PC-3 (cell line): ENCODE measurements at regions of chr7 and their contacts with region 1.

Region 1: GRCh38 chr7:115230882-115231571 is 309.1 kb downstream of the MDFIC start:
- DNase-seq: peak; percentile 91
- ATAC-seq: peak; percentile 96
- H3K4me3 ChIP-seq: peak overlapping the region; percentile 20; the same call in 1 of the 2 replicates
- H3K27ac ChIP-seq: peak overlapping the region; percentile 87
- H3K4me1 ChIP-seq: peaks cover 25% of the 10 kb centered on the region
- H3K27me3 ChIP-seq: no peaks in the 10 kb centered on the region
- CTCF ChIP-seq: no peak

Region 2: GRCh38 chr7:114812570-114812969 is 418.5 kb before region 1 on chr7:
- CTCF ChIA-PET with region 1: no interaction called
- POLR2A ChIA-PET with region 1: interaction called, 20 read pairs
- intact Hi-C with region 1: no loop called
- DNase-seq: no peak
- ATAC-seq: no peak
- H3K4me3 ChIP-seq: no peak overlapping the region
- H3K27ac ChIP-seq: no peak overlapping the region
- H3K4me1 ChIP-seq: no peaks in the 10 kb centered on the region
- H3K27me3 ChIP-seq: no peaks in the 10 kb centered on the region
- CTCF ChIP-seq: no peak

Region 3: DNA sequence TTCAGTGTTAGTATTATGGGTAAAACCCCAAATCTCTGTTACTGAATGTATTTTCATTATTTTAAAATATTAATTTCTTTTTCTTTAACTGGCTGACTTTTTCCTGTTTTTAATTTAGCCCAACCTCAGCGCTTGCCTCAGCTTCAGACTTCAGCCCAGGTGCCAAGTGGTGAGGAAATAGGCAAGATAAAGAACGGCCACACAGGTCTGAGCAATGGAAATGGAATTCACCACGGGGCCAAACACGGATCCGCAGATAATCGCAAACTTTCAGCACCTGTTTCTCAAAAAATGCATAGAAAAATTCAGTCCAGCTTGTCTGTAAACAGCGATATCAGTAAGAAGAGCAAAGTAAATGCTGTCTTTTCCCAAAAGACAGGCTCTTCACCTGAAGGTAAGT is 251.6 kb before region 1 on chr7:
- CTCF ChIA-PET with region 1: no interaction called
- POLR2A ChIA-PET with region 1: no interaction called
- intact Hi-C with region 1: no loop called
- DNase-seq: peak; percentile 83
- ATAC-seq: peak; percentile 99
- H3K4me3 ChIP-seq: peak overlapping the region; percentile 29; the same call in 1 of the 2 replicates
- H3K27ac ChIP-seq: no peak overlapping the region
- H3K4me1 ChIP-seq: peaks cover 22% of the 10 kb centered on the region
- H3K27me3 ChIP-seq: no peaks in the 10 kb centered on the region
- CTCF ChIP-seq: no peak

Region 4: DNA sequence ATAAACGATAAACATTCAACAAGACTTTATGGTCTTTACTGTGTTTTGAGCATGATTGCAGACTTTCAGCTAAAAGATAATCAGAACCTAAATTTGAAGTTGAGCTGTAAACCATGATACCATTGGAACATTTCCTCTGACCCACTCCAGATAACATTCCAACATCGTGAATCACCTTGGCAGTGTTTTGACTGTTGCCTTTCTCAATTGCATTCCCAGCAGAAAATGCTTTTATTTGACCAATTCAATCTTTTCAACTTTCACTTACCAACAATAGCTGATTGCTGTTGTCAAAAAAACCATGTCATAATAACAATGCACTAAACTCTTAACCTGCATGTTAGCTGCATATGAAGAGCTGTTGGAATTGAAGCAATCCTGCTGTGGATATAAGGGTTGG is 143.6 kb before region 1 on chr7:
- CTCF ChIA-PET with region 1: no interaction called
- POLR2A ChIA-PET with region 1: no interaction called
- intact Hi-C with region 1: loop called (anchors 5 kb)
- DNase-seq: peak; percentile 88
- ATAC-seq: peak; percentile 86
- H3K4me3 ChIP-seq: 0 out of 2 replicates have a peak overlapping the region, but pooled peaks have one; percentile 14
- H3K27ac ChIP-seq: no peak overlapping the region
- H3K4me1 ChIP-seq: peaks cover 33% of the 10 kb centered on the region
- H3K27me3 ChIP-seq: no peaks in the 10 kb centered on the region
- CTCF ChIP-seq: no peak

Region 5: GRCh38 chr7:115135769-115136410 is 95.1 kb before region 1 on chr7:
- CTCF ChIA-PET with region 1: no interaction called
- POLR2A ChIA-PET with region 1: no interaction called
- intact Hi-C with region 1: loop called (anchors 1 kb)
- DNase-seq: peak; percentile 80
- ATAC-seq: peak; percentile 83
- H3K4me3 ChIP-seq: peak overlapping the region; percentile 30
- H3K27ac ChIP-seq: peak overlapping the region; percentile 85
- H3K4me1 ChIP-seq: peaks cover 29% of the 10 kb centered on the region
- H3K27me3 ChIP-seq: no peaks in the 10 kb centered on the region
- CTCF ChIP-seq: no peak

Region 6: DNA sequence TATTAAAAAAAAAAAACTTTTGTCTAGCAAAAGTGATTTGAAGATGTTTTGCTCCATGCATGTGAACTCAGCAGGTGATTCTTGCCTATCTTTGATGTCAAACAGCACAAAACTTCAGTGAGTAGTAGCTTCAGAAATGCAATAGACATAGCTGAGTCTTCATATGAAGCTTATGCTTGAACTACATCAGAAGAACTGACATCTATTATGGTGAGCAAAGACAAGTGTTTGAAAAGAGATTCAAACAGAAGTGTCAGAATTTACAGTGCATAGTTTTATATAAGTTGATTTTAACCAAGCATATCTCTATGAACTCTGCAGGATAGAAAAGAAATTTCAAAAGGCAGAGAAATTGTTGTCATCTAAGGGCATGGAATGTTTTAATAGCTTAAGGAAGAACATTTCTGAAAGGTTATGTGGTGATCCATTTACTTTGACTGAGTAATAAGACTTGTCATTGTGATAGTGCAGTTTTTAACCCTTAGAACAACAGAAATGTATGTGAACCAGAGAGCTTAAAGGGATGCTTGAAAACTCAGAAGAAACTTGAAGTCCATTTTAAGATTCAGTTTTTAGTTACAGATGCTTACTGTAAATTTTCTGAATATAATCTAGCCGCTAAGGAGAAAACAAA is 42.2 kb after region 1 on chr7:
- CTCF ChIA-PET with region 1: no interaction called
- POLR2A ChIA-PET with region 1: no interaction called
- intact Hi-C with region 1: no loop called
- DNase-seq: no peak
- ATAC-seq: no peak
- H3K4me3 ChIP-seq: no peak overlapping the region
- H3K27ac ChIP-seq: no peak overlapping the region
- H3K4me1 ChIP-seq: no peaks in the 10 kb centered on the region
- H3K27me3 ChIP-seq: no peaks in the 10 kb centered on the region
- CTCF ChIP-seq: no peak

Region 7: DNA sequence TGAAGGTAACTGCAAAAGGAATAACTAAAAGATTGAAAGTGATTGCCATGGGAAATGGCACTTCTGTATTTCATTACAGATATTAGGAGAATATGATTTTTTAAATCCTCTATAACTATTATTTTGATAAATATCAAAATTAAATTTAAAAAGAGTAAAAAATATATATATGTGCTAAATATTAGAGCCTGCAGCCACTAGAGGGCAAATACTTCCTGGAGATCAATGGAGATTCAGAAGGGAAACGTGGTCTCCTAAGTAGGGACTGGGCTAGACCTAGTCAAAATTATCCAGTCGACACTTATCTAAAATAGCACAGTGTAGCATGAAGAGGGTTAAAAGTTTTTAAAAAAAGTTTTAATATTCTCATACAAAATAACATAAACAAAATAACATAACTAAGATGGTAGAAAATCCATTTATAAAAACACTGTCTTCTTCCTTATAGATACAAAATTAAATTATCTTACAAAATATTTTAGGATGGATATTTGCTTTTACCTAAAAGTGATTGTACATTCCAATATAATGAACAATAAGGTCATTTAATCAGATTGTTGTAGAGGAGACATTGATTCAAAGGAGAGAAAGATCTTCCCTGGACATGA is 125.2 kb after region 1 on chr7:
- CTCF ChIA-PET with region 1: interaction called, 4 read pairs
- POLR2A ChIA-PET with region 1: no interaction called
- intact Hi-C with region 1: loop called (anchors 2 kb)
- DNase-seq: peak; percentile 48
- ATAC-seq: 0 out of 2 replicates have a peak, but pooled peaks have one; percentile 28
- H3K4me3 ChIP-seq: no peak overlapping the region
- H3K27ac ChIP-seq: no peak overlapping the region
- H3K4me1 ChIP-seq: peaks cover 15% of the 10 kb centered on the region
- H3K27me3 ChIP-seq: no peaks in the 10 kb centered on the region
- CTCF ChIP-seq: peak; percentile 46

Region 8: GRCh38 chr7:115447495-115447894 is 216.5 kb after region 1 on chr7:
- CTCF ChIA-PET with region 1: interaction called, 3 read pairs
- POLR2A ChIA-PET with region 1: no interaction called
- intact Hi-C with region 1: loop called (anchors 1 kb)
- DNase-seq: peak; percentile 72
- ATAC-seq: peak; percentile 95
- H3K4me3 ChIP-seq: no peak overlapping the region
- H3K27ac ChIP-seq: no peak overlapping the region
- H3K4me1 ChIP-seq: peaks cover 3% of the 10 kb centered on the region; the same call in 1 of the 2 replicates
- H3K27me3 ChIP-seq: no peaks in the 10 kb centered on the region
- CTCF ChIP-seq: no peak

Region 9: DNA sequence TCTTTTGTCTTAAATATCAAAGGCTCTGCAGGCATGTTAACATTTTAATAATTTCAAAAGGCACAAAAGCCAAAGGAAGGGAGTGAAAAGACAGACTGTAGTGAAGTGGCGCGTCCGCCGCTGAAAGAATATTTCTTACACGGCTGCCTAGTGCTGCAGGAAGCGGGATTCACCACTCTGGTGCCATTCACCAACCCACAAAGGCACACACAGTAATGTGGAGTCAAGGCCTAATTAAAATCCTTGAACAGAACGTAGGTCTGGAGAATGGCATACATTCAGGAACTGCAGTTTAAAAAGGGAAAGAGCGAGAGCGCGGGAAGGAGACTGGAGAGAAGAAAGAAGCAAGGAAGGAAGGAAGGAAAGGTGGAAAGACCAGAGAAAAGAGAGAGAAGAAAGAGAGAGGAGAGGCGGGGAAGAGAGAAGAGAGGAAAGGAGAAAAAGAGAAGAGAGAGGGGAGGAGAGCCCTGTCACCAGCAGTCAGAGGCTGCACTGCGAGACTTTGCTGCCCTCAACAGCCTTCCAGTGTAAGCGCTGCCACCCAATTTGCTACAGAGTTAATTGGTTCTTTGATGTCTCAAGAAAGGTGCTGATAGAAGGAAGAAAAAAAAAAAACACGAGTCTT is 244.8 kb after region 1 on chr7:
- CTCF ChIA-PET with region 1: no interaction called
- POLR2A ChIA-PET with region 1: no interaction called
- intact Hi-C with region 1: loop called (anchors 10 kb)
- DNase-seq: peak; percentile 26
- ATAC-seq: peak; percentile 81
- H3K4me3 ChIP-seq: no peak overlapping the region
- H3K27ac ChIP-seq: no peak overlapping the region
- H3K4me1 ChIP-seq: no peaks in the 10 kb centered on the region
- H3K27me3 ChIP-seq: no peaks in the 10 kb centered on the region
- CTCF ChIP-seq: peak; percentile 44; the same call in 1 of the 2 replicates